ENCODE measurements at regions of chr11 and their contacts with region 1.

Region 1: DNA sequence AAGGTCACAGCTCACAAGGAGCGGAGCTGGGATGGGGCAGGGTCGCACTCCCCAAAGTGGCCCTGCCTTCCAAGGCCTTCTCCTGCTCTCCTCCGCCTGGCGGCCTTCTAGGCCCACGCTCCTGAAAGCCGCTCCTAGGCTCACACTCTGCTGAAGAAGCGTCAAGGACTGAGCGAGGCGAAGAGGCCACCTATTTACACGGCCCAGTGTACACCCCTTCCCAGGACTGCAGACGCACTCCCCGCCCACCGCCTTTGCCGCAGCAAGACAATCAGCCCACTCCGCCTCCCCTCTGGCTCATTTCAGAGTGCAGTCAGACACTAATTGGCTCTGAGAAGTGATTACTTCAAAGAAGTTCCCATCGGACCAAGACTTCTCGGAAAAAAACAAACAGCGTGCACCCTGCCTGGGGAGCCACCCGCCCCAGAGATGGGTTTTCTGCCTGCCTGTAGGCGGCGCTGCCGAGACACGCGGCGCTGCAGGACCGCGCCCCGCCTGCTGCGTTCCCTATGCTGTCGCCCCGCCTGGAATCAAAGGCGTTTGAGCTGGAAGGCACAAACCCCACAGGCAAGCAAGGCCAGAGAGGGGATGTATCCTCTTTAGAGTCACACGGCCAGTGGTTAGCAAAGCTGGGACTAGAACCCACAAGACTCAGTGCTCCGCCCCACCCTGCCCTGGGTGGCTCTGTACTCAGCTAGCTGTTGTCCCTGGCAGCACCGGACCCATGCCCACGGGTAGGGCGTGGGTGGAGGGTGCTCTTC is 414.8 kb downstream of the BUD13 start:
- DNase-seq: peak; percentile 43
- H3K4me3 ChIP-seq: no peak overlapping the region
- H3K27ac ChIP-seq: peak overlapping the region; percentile 39
- H3K4me1 ChIP-seq: peaks cover 25% of the 10 kb centered on the region
- H3K27me3 ChIP-seq: no peaks in the 10 kb centered on the region
- CTCF ChIP-seq: peak; percentile 87 to 91
- POLR2A ChIP-seq: no peak

Region 2: GRCh38 chr11:116312570-116313391 is 45.2 kb before region 1 on chr11:
- CTCF ChIA-PET with region 1: interaction called, 11 read pairs
- POLR2A ChIA-PET with region 1: no interaction called
- dilution Hi-C with region 1: no loop called
- intact Hi-C with region 1: loop called (anchors 1 kb)
- DNase-seq: peak; percentile 83
- H3K4me3 ChIP-seq: no peak overlapping the region
- H3K27ac ChIP-seq: no peak overlapping the region
- H3K4me1 ChIP-seq: peaks cover 12% of the 10 kb centered on the region
- H3K27me3 ChIP-seq: peaks cover 0 to 2% of the 10 kb centered on the region in 2 experiments
- CTCF ChIP-seq: no peak
- POLR2A ChIP-seq: no peak

Region 3: GRCh38 chr11:116420770-116421528 is 63.0 kb after region 1 on chr11:
- CTCF ChIA-PET with region 1: interaction called, 66 read pairs
- POLR2A ChIA-PET with region 1: no interaction called
- dilution Hi-C with region 1: no loop called
- intact Hi-C with region 1: loop called (anchors 1 kb)
- DNase-seq: no peak
- H3K4me3 ChIP-seq: no peak overlapping the region
- H3K27ac ChIP-seq: no peak overlapping the region
- H3K4me1 ChIP-seq: no peaks in the 10 kb centered on the region
- H3K27me3 ChIP-seq: no peaks in the 10 kb centered on the region
- CTCF ChIP-seq: no peak
- POLR2A ChIP-seq: no peak

Region 4: GRCh38 chr11:116471608-116472256 is 113.8 kb after region 1 on chr11:
- CTCF ChIA-PET with region 1: interaction called, 5 read pairs
- POLR2A ChIA-PET with region 1: no interaction called
- dilution Hi-C with region 1: no loop called
- intact Hi-C with region 1: loop called (anchors 1 kb)
- DNase-seq: peak; percentile 96
- H3K4me3 ChIP-seq: no peak overlapping the region
- H3K27ac ChIP-seq: peak overlapping the region; percentile 75
- H3K4me1 ChIP-seq: peaks cover 25% of the 10 kb centered on the region
- H3K27me3 ChIP-seq: peaks cover under 1 to 2% of the 10 kb centered on the region in 2 experiments
- CTCF ChIP-seq: no peak
- POLR2A ChIP-seq: no peak

Region 5: GRCh38 chr11:116513894-116514293 is 155.9 kb after region 1 on chr11:
- CTCF ChIA-PET with region 1: interaction called, 13 read pairs
- POLR2A ChIA-PET with region 1: no interaction called
- dilution Hi-C with region 1: no loop called
- intact Hi-C with region 1: no loop called
- DNase-seq: peak; percentile 78
- H3K4me3 ChIP-seq: no peak overlapping the region
- H3K27ac ChIP-seq: no peak overlapping the region
- H3K4me1 ChIP-seq: no peaks in the 10 kb centered on the region
- H3K27me3 ChIP-seq: peaks cover 0 to 5% of the 10 kb centered on the region in 2 experiments
- CTCF ChIP-seq: peak; percentile 43 to 71
- POLR2A ChIP-seq: no peak

Region 6: DNA sequence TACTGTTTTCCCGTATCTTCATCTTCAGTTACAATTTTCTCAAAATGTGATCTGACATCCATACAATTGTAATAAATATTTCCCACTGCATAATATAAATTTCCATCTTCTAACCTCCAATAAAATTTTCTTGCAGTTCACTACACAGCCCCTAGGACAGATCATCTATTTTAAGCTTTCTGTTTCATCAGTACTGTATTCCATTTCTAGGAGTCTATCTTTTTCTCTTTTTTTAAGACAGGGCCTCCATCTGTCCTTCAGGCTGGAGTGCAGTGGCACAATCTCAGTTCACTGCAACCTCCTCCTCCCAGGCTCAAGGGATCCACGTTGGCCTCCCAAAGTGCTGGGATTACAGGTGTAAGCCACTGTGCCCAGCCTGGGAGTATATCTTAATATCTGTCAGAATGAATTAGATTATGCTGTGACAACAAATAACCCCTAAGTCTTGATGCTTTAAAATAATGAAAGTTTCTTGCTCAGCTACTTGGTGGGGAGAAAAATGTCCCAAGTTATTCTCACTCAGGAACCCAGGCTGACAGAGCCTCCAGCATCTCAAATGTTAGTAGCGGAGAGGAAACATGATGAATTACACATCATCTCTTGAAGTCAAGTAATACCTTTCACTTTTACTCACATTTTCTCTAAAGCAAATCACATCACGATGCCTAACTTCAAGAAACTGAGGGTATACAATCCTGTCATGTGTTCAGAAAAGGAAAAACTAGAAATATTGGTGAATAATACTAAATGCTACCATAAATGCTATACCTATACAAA is 322.6 kb after region 1 on chr11:
- CTCF ChIA-PET with region 1: no interaction called
- POLR2A ChIA-PET with region 1: no interaction called
- dilution Hi-C with region 1: no loop called
- intact Hi-C with region 1: no loop called
- DNase-seq: no peak
- H3K4me3 ChIP-seq: no peak overlapping the region
- H3K27ac ChIP-seq: no peak overlapping the region
- H3K4me1 ChIP-seq: no peaks in the 10 kb centered on the region
- H3K27me3 ChIP-seq: peaks cover 5 to 9% of the 10 kb centered on the region in 2 experiments
- CTCF ChIP-seq: no peak
- POLR2A ChIP-seq: no peak

Region 7: DNA sequence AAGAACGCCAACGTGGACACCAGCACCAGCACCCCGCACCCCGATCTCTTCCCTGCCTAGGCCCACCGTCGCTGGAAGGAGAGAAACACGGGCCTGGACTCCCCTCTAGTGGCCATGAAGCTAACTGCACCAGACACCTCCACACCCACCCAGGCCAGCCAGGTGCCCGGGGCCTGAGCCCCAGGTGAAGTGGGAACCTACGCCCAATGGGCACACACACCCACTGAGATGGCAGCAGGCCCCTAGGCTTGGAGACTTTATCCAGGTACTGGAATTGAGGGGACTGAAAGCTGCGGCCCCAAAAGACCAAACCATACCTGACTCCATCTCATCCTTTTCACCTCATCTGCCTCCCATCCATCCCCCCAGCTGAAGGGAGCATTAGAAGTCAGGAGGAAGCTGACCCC is 333.8 kb after region 1 on chr11:
- CTCF ChIA-PET with region 1: interaction called, 5 read pairs
- POLR2A ChIA-PET with region 1: no interaction called
- dilution Hi-C with region 1: no loop called
- intact Hi-C with region 1: loop called (anchors 5 kb)
- DNase-seq: peak; percentile 24
- H3K4me3 ChIP-seq: no peak overlapping the region
- H3K27ac ChIP-seq: no peak overlapping the region
- H3K4me1 ChIP-seq: no peaks in the 10 kb centered on the region
- H3K27me3 ChIP-seq: no peaks in the 10 kb centered on the region
- CTCF ChIP-seq: peak; percentile 75 to 91
- POLR2A ChIP-seq: no peak

Measured in endothelial cell of umbilical vein (primary cell).